Sigmoid colon (tissue), 7 donors: ENCODE measurements at regions of chr1 and their contacts with region 1.

Region 1: DNA sequence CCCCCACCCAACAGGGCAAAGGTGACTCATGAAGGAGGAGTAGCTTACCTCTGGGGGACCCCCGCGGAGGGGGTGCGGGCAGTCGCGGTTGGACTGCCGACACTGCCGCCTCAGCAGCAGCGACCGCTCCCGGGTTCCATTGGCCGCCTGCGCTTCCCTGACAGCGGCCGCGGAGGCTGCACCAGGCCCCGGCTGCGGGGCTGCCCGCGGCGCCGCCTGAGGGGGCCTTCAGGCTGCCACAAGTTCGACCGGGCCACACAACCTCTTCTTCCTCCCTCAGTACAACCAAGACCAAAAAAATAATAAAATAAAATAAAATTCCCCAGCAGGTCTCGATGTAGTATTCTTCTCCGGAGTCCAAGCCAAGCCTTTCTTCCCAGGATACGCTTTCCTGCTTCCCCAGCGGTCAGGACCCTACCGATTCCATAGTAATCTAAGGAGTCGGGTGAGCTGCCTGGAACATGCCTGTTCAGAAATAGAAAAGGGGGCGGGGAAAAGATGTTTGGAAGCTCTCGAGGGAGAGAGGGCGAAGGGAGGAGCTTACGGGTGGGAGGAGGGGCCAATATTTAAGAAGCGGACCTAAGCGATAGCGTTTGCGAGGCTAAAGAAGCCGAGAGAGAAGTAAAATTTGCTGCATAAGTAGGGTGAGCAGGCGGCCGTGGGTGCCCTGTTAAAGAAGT is at the start of gene PI4KB:
- DNase-seq: peak; percentile 97
- H3K4me3 ChIP-seq: peak within 1 kb of the TSS; percentile 71 to 90 (median 80)
- H3K27ac ChIP-seq: peak within 1 kb of the TSS; percentile 86 to 95 (median 93)
- H3K4me1 ChIP-seq: peaks cover 0 to 37% (median 33%) of the 10 kb centered on the region in 4 donors
- H3K27me3 ChIP-seq: no peaks in the 10 kb centered on the region
- CTCF ChIP-seq: no peak
- EP300 ChIP-seq: no peak
- POLR2A ChIP-seq: peak in 1 of 2 donors; percentile 7
- total RNA-seq, gene PI4KB: 57.6 to 75.2 (median 62.4) TPM

Region 2: DNA sequence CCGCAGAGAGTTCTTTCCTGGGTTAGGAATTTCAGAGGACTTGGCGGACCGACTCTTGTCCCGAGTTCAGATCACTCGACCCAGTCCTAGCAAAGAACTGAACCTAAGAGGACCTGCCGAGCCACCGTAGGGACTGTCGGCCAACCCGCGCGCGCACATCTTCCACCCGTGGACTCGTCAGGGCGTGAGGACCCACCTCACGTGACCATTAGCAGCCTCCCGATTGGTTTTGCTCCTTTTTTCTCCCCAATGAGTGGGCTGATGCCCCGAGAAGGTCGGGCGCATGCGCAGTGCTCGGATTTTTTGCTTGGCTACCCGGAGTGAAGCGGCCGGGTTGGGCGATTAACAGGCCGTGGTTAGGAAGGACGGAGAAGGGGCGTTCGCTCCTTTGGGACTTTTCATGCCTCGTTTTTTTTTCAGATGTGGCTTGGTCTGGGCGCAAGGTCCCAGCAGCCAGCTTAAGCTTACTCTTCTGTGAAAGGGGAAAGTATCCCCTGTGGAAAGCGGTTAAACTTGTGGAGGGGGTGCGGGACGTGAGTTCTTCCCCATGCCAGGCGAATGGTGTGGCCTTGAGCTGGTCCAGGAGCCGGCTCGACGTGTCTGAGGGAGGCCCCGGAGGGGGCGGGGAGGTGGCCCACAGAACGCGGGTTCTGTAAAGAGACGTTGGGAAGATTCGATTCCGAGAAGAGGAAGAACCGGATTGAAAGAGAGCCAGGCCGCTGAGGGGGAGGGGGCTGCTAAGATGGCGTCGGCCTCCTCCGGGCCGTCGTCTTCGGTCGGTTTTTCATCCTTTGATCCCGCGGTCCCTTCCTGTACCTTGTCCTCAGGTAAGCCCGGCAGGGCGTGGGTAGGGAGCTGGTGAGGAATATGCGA is 128.9 kb before region 1 on chr1 and contains the start of gene PIP5K1A:
- intact Hi-C with region 1: loop called (anchors 5 kb)
- DNase-seq: peak; percentile 100
- H3K4me3 ChIP-seq: peak within 1 kb of the TSS; percentile 62 to 88 (median 70)
- H3K27ac ChIP-seq: peak within 1 kb of the TSS; percentile 90 to 95 (median 93)
- H3K4me1 ChIP-seq: peaks cover 0 to 47% (median 38%) of the 10 kb centered on the region in 4 donors
- H3K27me3 ChIP-seq: no peaks in the 10 kb centered on the region
- CTCF ChIP-seq: no peak
- EP300 ChIP-seq: no peak
- POLR2A ChIP-seq: peak; percentile 84 to 93
- total RNA-seq, gene PIP5K1A: 33.2 to 51.5 (median 37.8) TPM

Region 3: DNA sequence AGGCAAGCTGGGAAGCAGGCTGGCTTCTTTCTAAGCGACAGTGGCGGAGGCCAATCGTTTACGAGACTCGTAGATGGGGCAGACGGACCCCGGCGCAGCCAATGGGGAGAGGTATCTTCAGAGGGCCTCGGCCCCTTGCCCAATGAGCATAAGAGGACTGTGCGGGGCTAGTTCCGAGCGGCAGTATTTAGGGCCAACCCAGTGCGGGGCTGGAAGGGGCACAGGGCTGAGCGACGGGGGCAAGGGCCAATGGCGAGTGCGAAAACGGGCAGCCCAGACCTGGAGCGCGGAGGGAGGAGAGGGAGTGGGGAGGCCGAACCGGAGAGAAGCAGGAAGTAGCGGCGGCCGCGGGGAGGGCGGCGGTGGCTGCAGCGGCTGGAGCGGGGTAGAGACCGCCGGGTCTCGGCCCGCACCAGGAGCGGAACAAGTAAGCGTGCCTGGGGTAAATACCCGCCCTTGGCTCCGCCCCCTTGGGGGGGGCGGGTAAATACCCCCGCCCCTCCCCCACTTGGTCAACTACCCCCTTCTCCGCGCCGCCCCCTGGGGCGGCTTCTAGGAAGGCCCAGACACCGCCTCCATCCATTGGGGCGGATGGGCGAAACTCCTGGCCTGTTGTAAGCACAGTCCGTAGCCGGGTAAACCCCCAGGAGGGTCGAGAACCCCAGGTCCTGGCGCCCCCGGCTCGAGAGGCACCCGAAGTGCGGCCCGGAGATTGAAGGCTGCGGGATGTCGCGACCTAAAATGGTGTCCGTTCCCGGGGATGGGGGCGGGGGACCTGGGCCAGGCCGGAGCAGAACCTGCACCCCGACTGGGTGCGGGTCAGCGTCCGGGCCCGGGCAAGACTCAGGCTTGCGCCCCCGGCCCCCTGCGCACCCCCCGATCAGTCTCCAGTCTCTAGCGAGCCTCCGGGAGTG is 45.1 kb before region 1 on chr1 and contains the start of gene ZNF687:
- intact Hi-C with region 1: loop called (anchors 5 kb)
- DNase-seq: peak; percentile 100
- H3K4me3 ChIP-seq: peak within 1 kb of the TSS; percentile 73 to 84 (median 80)
- H3K27ac ChIP-seq: peak within 1 kb of the TSS; percentile 97 to 99 (median 98)
- H3K4me1 ChIP-seq: peaks cover 2 to 22% (median 21%) of the 10 kb centered on the region in 4 donors
- H3K27me3 ChIP-seq: no peaks in the 10 kb centered on the region
- CTCF ChIP-seq: no peak
- EP300 ChIP-seq: no peak
- POLR2A ChIP-seq: peak; percentile 60 to 86
- total RNA-seq, gene ZNF687: 17.6 to 24.2 (median 18.3) TPM

Region 4: GRCh38 chr1:151292207-151293030 is 34.9 kb before region 1 on chr1:
- intact Hi-C with region 1: no loop called
- DNase-seq: no peak
- H3K4me3 ChIP-seq: no peak overlapping the region
- H3K27ac ChIP-seq: peak overlapping the region in 2 of 4 donors; percentile 5 to 28
- H3K4me1 ChIP-seq: peaks cover 0 to 8% (median 0%) of the 10 kb centered on the region in 4 donors
- H3K27me3 ChIP-seq: no peaks in the 10 kb centered on the region
- CTCF ChIP-seq: no peak
- EP300 ChIP-seq: no peak
- POLR2A ChIP-seq: no peak

Region 5: GRCh38 chr1:151340870-151341754 is 13.7 kb after region 1 on chr1:
- intact Hi-C with region 1: loop called (anchors 2 kb)
- DNase-seq: no peak
- H3K4me3 ChIP-seq: no peak overlapping the region
- H3K27ac ChIP-seq: peak overlapping the region; percentile 33 to 55 (median 48)
- H3K4me1 ChIP-seq: peaks cover 0 to 10% (median 7%) of the 10 kb centered on the region in 4 donors
- H3K27me3 ChIP-seq: no peaks in the 10 kb centered on the region
- CTCF ChIP-seq: peak; percentile 66 to 73 (median 70)
- EP300 ChIP-seq: no peak
- POLR2A ChIP-seq: no peak